SK-N-SH (cell line): ENCODE measurements at regions of chr3 and their contacts with region 1.

Region 1: DNA sequence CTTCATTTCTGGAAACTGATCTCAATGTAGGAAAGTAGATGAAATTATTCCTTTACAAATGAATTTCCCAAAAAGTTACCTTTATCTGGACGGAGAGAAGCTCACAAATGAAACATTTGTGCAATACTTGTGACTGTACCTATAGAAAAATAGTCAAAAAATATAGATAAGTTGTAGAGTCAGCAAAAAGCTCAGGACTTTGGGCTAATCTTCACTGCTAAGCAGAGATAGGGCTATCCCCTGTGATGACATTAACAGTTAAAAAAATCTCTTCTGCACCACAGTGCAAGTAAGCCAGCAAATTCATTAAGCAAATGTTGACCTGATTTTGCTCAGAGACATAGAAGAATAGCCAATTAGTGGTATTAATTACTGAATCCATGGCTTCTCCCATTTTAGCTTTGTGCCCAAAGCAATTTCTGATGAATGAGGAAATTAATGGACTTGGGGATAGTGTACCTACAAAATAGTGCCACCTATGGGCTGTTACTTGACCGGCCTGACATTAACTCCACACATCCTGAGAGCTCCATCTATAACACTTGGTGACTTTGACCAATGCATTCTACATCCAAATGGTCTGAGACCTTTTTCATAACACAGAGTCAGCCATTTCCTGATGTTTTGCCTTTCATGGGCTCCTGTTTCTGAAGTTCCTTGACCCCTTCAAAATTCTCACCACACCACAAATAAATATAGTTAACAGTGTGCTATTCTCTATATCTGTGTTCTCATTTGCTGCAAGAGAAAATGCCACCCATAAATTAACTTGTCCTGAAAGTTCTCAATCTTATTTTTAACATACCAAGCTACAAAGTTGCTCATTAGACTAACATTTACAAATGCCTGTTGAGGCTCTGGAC is 105.0 kb downstream of the SSR3 start:
- DNase-seq: peak; percentile 42
- H3K4me3 ChIP-seq: no peak overlapping the region
- H3K27ac ChIP-seq: no peak overlapping the region
- H3K4me1 ChIP-seq: peaks cover 2 to 9% of the 10 kb centered on the region in 2 experiments
- H3K27me3 ChIP-seq: no peaks in the 10 kb centered on the region
- CTCF ChIP-seq: peak; percentile 68
- EP300 ChIP-seq: no peak
- RAD21 ChIP-seq: peak; percentile 77

Region 2: DNA sequence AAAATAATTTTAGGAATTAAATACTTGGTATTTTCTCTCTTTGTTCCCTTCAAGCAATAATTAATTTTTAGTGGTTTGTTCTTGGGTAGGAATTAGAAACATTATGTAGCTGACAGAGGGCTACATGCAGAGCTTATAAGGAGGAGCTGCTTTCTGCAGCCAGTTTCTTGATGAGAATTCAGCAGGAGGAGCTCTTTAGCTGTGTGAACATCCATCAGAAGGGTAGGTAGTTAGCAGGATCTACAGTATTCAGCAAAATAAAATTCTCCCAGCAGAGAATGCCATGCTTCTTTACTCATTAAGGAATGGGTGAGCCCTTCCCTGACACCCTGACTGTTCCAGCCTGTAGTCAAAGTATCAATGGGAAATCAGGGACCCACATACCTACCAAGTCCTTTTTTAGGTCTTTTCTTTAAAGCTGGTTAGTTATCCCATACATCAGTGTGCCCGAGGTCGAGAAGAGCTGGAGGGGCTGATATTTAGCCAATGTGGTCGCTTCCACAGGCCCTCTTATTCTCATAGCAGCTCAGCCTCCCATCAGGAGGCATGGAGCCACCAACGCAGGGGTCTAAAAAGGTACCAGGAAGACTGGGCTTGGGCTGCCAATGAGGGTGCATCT is 275.6 kb before region 1 on chr3:
- CTCF ChIA-PET with region 1: interaction called, 33 read pairs
- POLR2A ChIA-PET with region 1: no interaction called
- DNase-seq: peak; percentile 33
- H3K4me3 ChIP-seq: no peak overlapping the region
- H3K27ac ChIP-seq: peak overlapping the region; percentile 17 to 18; a peak in 2 of 4 replicates
- H3K4me1 ChIP-seq: peaks cover 9 to 10% of the 10 kb centered on the region in 2 experiments; a peak in 3 of 4 replicates
- H3K27me3 ChIP-seq: no peaks in the 10 kb centered on the region
- CTCF ChIP-seq: peak; percentile 78
- EP300 ChIP-seq: no peak
- RAD21 ChIP-seq: peak; percentile 82

Region 3: DNA sequence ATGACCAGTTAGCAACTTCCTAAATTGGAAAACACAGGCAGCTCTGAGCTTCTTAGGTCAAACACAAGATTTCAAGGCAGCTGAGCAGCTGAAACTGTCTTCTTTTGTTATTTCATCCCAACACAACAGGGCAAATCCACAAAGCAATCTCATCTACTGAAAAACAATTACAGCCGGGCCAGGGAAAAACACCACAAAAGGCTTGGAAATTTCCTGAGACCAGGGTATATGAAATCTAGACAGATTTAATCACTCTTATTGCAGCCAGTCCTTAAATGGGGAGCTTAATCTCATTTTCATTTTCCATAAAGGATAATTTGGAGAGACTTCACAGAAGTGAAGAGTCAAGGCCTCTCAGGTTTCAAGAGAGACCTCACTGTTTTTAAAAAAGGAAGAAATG is 76.8 kb before region 1 on chr3:
- CTCF ChIA-PET with region 1: interaction called, 13 read pairs
- POLR2A ChIA-PET with region 1: no interaction called
- DNase-seq: peak; percentile 27
- H3K4me3 ChIP-seq: no peak overlapping the region
- H3K27ac ChIP-seq: peak overlapping the region; percentile 38 to 85; a peak in 3 of 4 replicates
- H3K4me1 ChIP-seq: peaks cover 16 to 23% of the 10 kb centered on the region in 2 experiments; a peak in 3 of 4 replicates
- H3K27me3 ChIP-seq: no peaks in the 10 kb centered on the region
- CTCF ChIP-seq: no peak
- EP300 ChIP-seq: peak in 1 of 2 experiments; percentile 55; a peak in 2 of 4 replicates
- RAD21 ChIP-seq: no peak

Region 4: GRCh38 chr3:156396851-156397250 is 53.1 kb before region 1 on chr3:
- CTCF ChIA-PET with region 1: interaction called, 14 read pairs
- POLR2A ChIA-PET with region 1: no interaction called
- DNase-seq: no peak
- H3K4me3 ChIP-seq: no peak overlapping the region
- H3K27ac ChIP-seq: peak overlapping the region; percentile 22 to 44; a peak in 3 of 4 replicates
- H3K4me1 ChIP-seq: peaks cover 6 to 20% of the 10 kb centered on the region in 2 experiments; a peak in 2 of 4 replicates
- H3K27me3 ChIP-seq: no peaks in the 10 kb centered on the region
- CTCF ChIP-seq: no peak
- EP300 ChIP-seq: no peak
- RAD21 ChIP-seq: no peak

Region 5: GRCh38 chr3:156461889-156462288 is 11.9 kb after region 1 on chr3:
- CTCF ChIA-PET with region 1: interaction called, 16 read pairs
- POLR2A ChIA-PET with region 1: no interaction called
- DNase-seq: no peak
- H3K4me3 ChIP-seq: no peak overlapping the region
- H3K27ac ChIP-seq: no peak overlapping the region
- H3K4me1 ChIP-seq: no peaks in the 10 kb centered on the region
- H3K27me3 ChIP-seq: no peaks in the 10 kb centered on the region
- CTCF ChIP-seq: no peak
- EP300 ChIP-seq: no peak
- RAD21 ChIP-seq: no peak

Region 6: DNA sequence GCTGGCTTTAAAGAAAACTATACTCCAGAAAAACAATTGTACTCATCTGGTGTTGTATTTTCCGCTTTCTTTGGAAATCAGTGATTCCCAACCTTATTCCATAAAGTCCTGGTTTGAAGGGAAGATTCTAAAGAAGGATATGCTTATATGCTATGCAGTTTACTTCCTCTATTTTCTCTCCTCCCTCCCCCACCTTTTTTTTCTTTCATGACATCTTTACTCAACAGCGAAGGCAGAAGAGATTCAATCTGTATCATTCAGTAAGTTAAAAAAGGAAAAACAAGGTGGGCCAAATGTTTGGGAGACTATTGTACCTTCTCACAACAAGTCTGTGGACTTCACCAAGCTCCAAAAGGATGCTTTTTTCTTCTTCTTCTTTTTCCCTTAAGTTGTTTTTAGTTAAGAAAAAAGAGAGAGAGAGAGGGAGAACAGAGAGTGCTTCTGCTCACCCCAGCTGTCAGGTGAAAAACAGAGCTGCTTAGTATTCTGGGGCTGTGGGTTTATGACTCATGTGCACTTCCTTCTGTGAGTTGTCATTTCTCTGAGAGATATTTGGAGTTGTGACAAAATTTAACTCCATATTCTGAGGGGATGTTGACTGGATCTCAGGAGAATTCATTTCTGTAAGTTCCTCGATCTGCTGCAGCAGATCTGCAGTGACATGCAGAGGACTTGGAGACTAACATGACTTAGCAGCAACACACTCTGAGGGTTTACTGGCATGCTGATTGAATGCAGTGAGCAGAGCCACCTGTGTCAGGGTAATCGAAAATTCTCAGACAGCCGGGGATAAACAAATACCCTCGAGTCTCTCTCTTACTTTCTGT is 34.2 kb after region 1 on chr3:
- CTCF ChIA-PET with region 1: interaction called, 15 read pairs
- POLR2A ChIA-PET with region 1: no interaction called
- DNase-seq: no peak
- H3K4me3 ChIP-seq: peak overlapping the region; percentile 12 to 48; a peak in 3 of 4 replicates
- H3K27ac ChIP-seq: peak overlapping the region; percentile 91 to 96
- H3K4me1 ChIP-seq: peaks cover 6 to 19% of the 10 kb centered on the region in 2 experiments
- H3K27me3 ChIP-seq: no peaks in the 10 kb centered on the region
- CTCF ChIP-seq: no peak
- EP300 ChIP-seq: peak; percentile 74 to 98
- RAD21 ChIP-seq: no peak

Region 7: DNA sequence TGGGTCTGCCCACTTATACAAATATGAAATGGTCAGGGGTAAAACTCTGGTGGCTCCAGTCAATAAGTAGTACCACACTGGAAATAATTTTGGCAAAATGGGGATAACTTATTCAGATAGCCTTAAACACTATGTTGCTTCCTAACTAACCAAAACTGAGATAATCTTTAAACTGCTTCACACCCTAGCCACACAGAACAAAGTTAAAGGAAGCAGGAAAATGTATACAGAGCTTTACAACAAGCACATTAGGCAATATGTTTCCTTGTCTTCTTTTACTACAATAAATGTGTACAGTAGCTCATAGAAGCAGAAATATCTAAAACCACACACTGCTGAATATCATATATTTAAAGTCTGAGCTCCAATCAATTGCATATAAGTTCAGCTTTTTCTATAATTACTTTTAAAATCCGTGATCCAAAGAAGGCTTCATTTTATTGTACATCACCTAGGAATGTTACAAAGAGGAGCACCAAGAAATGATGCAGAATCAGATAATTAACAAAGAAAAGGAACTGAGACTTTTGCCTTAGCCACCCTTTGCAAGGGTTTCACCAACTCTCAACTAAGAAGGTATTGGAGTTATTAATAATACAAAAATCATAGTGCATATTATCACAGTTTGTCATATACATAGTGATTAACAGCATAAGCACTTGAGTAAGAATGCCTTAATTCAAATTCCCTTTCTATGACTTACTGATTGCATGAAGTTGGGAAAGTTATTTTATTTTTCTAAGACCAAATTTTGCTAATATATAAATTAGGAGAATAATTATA is 114.1 kb after region 1 on chr3:
- CTCF ChIA-PET with region 1: no interaction called
- POLR2A ChIA-PET with region 1: no interaction called
- DNase-seq: no peak
- H3K4me3 ChIP-seq: no peak overlapping the region
- H3K27ac ChIP-seq: peak overlapping the region in 1 of 2 experiments; percentile 5; a peak in 1 of 4 replicates
- H3K4me1 ChIP-seq: peaks cover 7% of the 10 kb centered on the region in 2 experiments; a peak in 3 of 4 replicates
- H3K27me3 ChIP-seq: no peaks in the 10 kb centered on the region
- CTCF ChIP-seq: no peak
- EP300 ChIP-seq: no peak
- RAD21 ChIP-seq: no peak